ENCODE measurements at regions of chr15 and their contacts with region 1.

Region 1: DNA sequence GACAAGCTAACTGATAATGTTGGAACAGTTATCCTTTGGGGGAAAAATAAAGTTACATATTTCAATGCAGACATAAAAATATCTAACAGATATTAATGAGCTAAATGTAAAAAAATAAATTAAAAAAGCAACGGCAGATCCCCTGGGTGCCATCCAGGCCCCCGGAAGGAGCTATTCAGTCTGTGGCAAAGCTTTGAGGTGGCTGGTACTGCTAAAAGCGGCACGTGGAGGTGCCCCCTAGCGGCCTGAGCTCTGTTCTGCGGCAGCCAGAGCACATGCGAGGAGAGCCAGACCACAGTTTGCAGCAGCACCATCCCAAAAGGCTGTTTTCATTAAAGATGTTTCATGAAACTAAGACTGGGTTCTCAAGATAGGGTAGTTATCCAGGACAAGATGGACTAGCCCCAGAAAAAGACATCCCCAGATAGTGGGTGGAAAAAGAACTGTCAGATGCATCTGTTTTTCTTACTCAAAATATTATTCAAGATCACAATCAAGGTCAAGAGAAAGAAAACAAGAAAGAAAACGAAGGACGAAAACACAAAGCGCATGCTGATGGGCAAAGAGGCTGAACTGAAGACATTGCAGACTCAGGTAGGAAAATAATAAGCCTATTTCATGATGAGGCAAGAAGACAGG is 18.7 kb downstream of the AP3S2 start:
- DNase-seq: peak; percentile 66
- H3K4me3 Mint-ChIP-seq: no peak overlapping the region
- H3K27ac Mint-ChIP-seq: no peak overlapping the region
- H3K4me1 Mint-ChIP-seq: peaks cover 5% of the 10 kb centered on the region
- H3K27me3 Mint-ChIP-seq: no peaks in the 10 kb centered on the region

Region 2: GRCh38 chr15:89740137-89740536 is 134.9 kb before region 1 on chr15:
- intact Hi-C with region 1: loop called (anchors 1 kb)
- DNase-seq: peak; percentile 53
- H3K4me3 Mint-ChIP-seq: no peak overlapping the region
- H3K27ac Mint-ChIP-seq: no peak overlapping the region
- H3K4me1 Mint-ChIP-seq: no peaks in the 10 kb centered on the region
- H3K27me3 Mint-ChIP-seq: peaks cover 14% of the 10 kb centered on the region

Region 3: GRCh38 chr15:89760303-89761008 is 114.6 kb before region 1 on chr15:
- intact Hi-C with region 1: loop called (anchors 1 kb)
- DNase-seq: peak; percentile 53
- H3K4me3 Mint-ChIP-seq: no peak overlapping the region
- H3K27ac Mint-ChIP-seq: no peak overlapping the region
- H3K4me1 Mint-ChIP-seq: no peaks in the 10 kb centered on the region
- H3K27me3 Mint-ChIP-seq: peaks cover 13% of the 10 kb centered on the region

Region 4: DNA sequence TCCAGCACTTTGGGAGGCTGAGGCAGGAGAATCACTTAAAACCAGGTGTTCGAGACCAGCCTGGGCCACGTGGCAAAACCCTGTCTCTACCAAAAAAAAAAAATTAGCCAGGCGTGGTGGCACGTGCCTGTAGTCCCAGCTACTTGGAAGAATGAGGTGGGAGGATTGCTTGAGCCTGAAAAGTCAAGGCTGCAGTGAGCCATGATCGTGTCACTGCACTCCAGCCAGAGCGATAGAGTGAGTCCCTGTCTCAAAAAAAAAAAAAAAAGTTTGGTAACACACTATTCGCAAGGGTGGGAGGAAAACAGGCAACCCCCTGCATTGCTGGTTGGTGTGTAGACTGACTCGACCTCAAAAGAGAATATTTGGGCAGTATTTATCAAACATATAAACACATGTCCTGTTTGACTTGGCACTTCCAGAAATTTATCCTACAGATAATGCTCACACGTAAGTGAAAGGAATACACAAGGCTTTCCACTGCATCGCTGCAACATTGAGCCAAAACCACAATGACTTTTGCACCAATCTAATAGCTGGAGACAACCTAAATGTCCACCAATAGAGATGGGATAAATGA is 57.3 kb before region 1 on chr15:
- intact Hi-C with region 1: loop called (anchors 5 kb)
- DNase-seq: no peak
- H3K4me3 Mint-ChIP-seq: no peak overlapping the region
- H3K27ac Mint-ChIP-seq: no peak overlapping the region
- H3K4me1 Mint-ChIP-seq: peaks cover 8% of the 10 kb centered on the region
- H3K27me3 Mint-ChIP-seq: peaks cover 47% of the 10 kb centered on the region

Region 5: GRCh38 chr15:89947385-89947784 is 72.3 kb after region 1 on chr15:
- intact Hi-C with region 1: no loop called
- DNase-seq: no peak
- H3K4me3 Mint-ChIP-seq: no peak overlapping the region
- H3K27ac Mint-ChIP-seq: no peak overlapping the region
- H3K4me1 Mint-ChIP-seq: no peaks in the 10 kb centered on the region
- H3K27me3 Mint-ChIP-seq: peaks cover 3% of the 10 kb centered on the region

Region 6: GRCh38 chr15:90086868-90087268 is 211.8 kb after region 1 on chr15:
- intact Hi-C with region 1: loop called (anchors 1 kb)
- DNase-seq: no peak
- H3K4me3 Mint-ChIP-seq: no peak overlapping the region
- H3K27ac Mint-ChIP-seq: no peak overlapping the region
- H3K4me1 Mint-ChIP-seq: peaks cover 4% of the 10 kb centered on the region
- H3K27me3 Mint-ChIP-seq: no peaks in the 10 kb centered on the region